ENCODE measurements at regions of chr4 and their contacts with region 1.

Region 1: GRCh38 chr4:121370729-121371325 is 10.0 kb downstream of the QRFPR start:
- DNase-seq: peak; percentile 55
- H3K4me3 Mint-ChIP-seq: no peak overlapping the region
- H3K27ac Mint-ChIP-seq: no peak overlapping the region
- H3K4me1 Mint-ChIP-seq: peaks cover 11% of the 10 kb centered on the region
- H3K27me3 Mint-ChIP-seq: no peaks in the 10 kb centered on the region
- CTCF ChIP-seq: peak; percentile 23

Region 2: GRCh38 chr4:121199742-121200561 is 170.9 kb before region 1 on chr4:
- CTCF ChIA-PET with region 1: no interaction called
- intact Hi-C with region 1: no loop called
- DNase-seq: no peak
- H3K4me3 Mint-ChIP-seq: no peak overlapping the region
- H3K27ac Mint-ChIP-seq: no peak overlapping the region
- H3K4me1 Mint-ChIP-seq: peaks cover 9% of the 10 kb centered on the region
- H3K27me3 Mint-ChIP-seq: no peaks in the 10 kb centered on the region
- CTCF ChIP-seq: no peak

Region 3: GRCh38 chr4:121400632-121401031 is 29.8 kb after region 1 on chr4:
- CTCF ChIA-PET with region 1: no interaction called
- intact Hi-C with region 1: no loop called
- DNase-seq: no peak
- H3K4me3 Mint-ChIP-seq: no peak overlapping the region
- H3K27ac Mint-ChIP-seq: no peak overlapping the region
- H3K4me1 Mint-ChIP-seq: no peaks in the 10 kb centered on the region
- H3K27me3 Mint-ChIP-seq: no peaks in the 10 kb centered on the region
- CTCF ChIP-seq: no peak

Region 4: GRCh38 chr4:121421594-121421993 is 50.8 kb after region 1 on chr4:
- CTCF ChIA-PET with region 1: interaction called, 11 read pairs
- intact Hi-C with region 1: loop called (anchors 1 kb)
- DNase-seq: no peak
- H3K4me3 Mint-ChIP-seq: no peak overlapping the region
- H3K27ac Mint-ChIP-seq: no peak overlapping the region
- H3K4me1 Mint-ChIP-seq: no peaks in the 10 kb centered on the region
- H3K27me3 Mint-ChIP-seq: no peaks in the 10 kb centered on the region
- CTCF ChIP-seq: no peak

Region 5: DNA sequence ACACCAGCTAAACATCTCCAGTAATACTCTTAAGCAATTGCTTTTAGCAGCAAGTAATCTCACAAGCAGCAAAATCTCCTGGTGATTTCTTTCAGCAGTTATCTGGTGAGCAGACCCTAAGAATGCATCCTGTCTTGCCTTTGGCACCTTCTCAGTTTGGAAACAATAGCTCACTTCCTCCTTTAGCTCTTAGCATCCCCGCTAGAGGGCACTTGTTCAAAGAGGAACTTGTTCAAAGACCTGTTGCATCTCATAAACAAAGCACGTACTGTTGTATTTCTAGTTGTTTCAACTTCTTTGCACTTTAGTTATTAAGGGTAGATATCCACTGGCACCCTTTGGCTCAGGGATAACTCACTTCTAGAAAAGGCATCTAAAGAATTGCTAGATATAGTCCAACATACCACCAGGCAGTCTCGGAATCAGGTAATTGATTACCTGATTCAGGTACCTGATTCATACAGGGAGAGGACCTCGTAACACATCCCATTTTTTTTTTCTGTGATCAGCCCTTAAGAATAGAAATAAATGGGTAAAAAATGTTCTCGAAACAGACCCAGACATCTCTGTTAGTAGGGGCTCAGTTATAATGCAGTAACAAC is 91.9 kb after region 1 on chr4:
- CTCF ChIA-PET with region 1: interaction called, 9 read pairs
- intact Hi-C with region 1: loop called (anchors 2 kb)
- DNase-seq: peak; percentile 58
- H3K4me3 Mint-ChIP-seq: no peak overlapping the region
- H3K27ac Mint-ChIP-seq: no peak overlapping the region
- H3K4me1 Mint-ChIP-seq: no peaks in the 10 kb centered on the region
- H3K27me3 Mint-ChIP-seq: no peaks in the 10 kb centered on the region
- CTCF ChIP-seq: peak; percentile 27

Region 6: GRCh38 chr4:121656269-121656641 is 285.4 kb after region 1 on chr4:
- CTCF ChIA-PET with region 1: interaction called, 3 read pairs
- intact Hi-C with region 1: loop called (anchors 1 kb)
- DNase-seq: peak; percentile 32
- H3K4me3 Mint-ChIP-seq: no peak overlapping the region
- H3K27ac Mint-ChIP-seq: peak overlapping the region; percentile 3
- H3K4me1 Mint-ChIP-seq: no peaks in the 10 kb centered on the region
- H3K27me3 Mint-ChIP-seq: no peaks in the 10 kb centered on the region
- CTCF ChIP-seq: no peak

Region 7: GRCh38 chr4:121736735-121737351 is 366.0 kb after region 1 on chr4:
- CTCF ChIA-PET with region 1: interaction called, 7 read pairs
- intact Hi-C with region 1: loop called (anchors 2 kb)
- DNase-seq: peak; percentile 58
- H3K4me3 Mint-ChIP-seq: no peak overlapping the region
- H3K27ac Mint-ChIP-seq: no peak overlapping the region
- H3K4me1 Mint-ChIP-seq: peaks cover 9% of the 10 kb centered on the region
- H3K27me3 Mint-ChIP-seq: no peaks in the 10 kb centered on the region
- CTCF ChIP-seq: peak; percentile 42

Measured in Calu3 (cell line).